Thyroid gland (tissue), 4 donors: ENCODE measurements at regions of chr1 and their contacts with region 1.

Region 1: GRCh38 chr1:171081314-171081753 is 9.4 kb upstream of the FMO3 start:
- DNase-seq: no peak
- H3K4me3 ChIP-seq: no peak overlapping the region
- H3K27ac ChIP-seq: peak overlapping the region in 2 of 3 donors; percentile 14 to 29
- H3K4me1 ChIP-seq: peaks cover 15 to 24% of the 10 kb centered on the region in 2 donors
- H3K27me3 ChIP-seq: no peaks in the 10 kb centered on the region
- CTCF ChIP-seq: peak in 4 of 6 experiments; percentile 50 to 58 (median 56)
- POLR2A ChIP-seq: no peak

Region 2: GRCh38 chr1:171191992-171192391 is 110.7 kb after region 1 on chr1:
- intact Hi-C with region 1: loop called (anchors 10 kb)
- DNase-seq: no peak
- H3K4me3 ChIP-seq: no peak overlapping the region
- H3K27ac ChIP-seq: no peak overlapping the region
- H3K4me1 ChIP-seq: peaks cover 0 to 3% of the 10 kb centered on the region in 2 donors
- H3K27me3 ChIP-seq: no peaks in the 10 kb centered on the region
- CTCF ChIP-seq: no peak
- POLR2A ChIP-seq: no peak

Region 3: GRCh38 chr1:171226747-171227370 is 145.5 kb after region 1 on chr1:
- intact Hi-C with region 1: loop called (anchors 5 kb)
- DNase-seq: peak in 1 of 2 donors; percentile 20
- H3K4me3 ChIP-seq: no peak overlapping the region
- H3K27ac ChIP-seq: no peak overlapping the region
- H3K4me1 ChIP-seq: no peaks in the 10 kb centered on the region
- H3K27me3 ChIP-seq: no peaks in the 10 kb centered on the region
- CTCF ChIP-seq: peak; percentile 15 to 69 (median 52)
- POLR2A ChIP-seq: no peak